Activated CD4-positive, alpha-beta T cell treated with anti-CD3 and anti-CD28 coated beads, Interleukin-2, amount 10 ng/mL, durations not matched to agents 24 days and 14 days (primary cell): ENCODE measurements at regions of chr13 and their contacts with region 1.

Region 1: GRCh38 chr13:40517486-40518480 is 148.7 kb downstream of the FOXO1 start:
- DNase-seq: no peak
- H3K4me3 Mint-ChIP-seq: peak overlapping the region; percentile 72
- H3K27ac Mint-ChIP-seq: peak overlapping the region; percentile 92
- H3K4me1 Mint-ChIP-seq: peaks cover 63% of the 10 kb centered on the region
- H3K27me3 Mint-ChIP-seq: no peaks in the 10 kb centered on the region

Region 2: GRCh38 chr13:40060296-40061007 is 457.3 kb before region 1 on chr13:
- intact Hi-C with region 1: loop called (anchors 2 kb)
- DNase-seq: peak; percentile 53
- H3K4me3 Mint-ChIP-seq: no peak overlapping the region
- H3K27ac Mint-ChIP-seq: peak overlapping the region; percentile 55
- H3K4me1 Mint-ChIP-seq: peaks cover 35% of the 10 kb centered on the region
- H3K27me3 Mint-ChIP-seq: no peaks in the 10 kb centered on the region

Region 3: GRCh38 chr13:40221460-40222201 is 296.2 kb before region 1 on chr13:
- intact Hi-C with region 1: loop called (anchors 5 kb)
- DNase-seq: peak; percentile 74
- H3K4me3 Mint-ChIP-seq: peak overlapping the region; percentile 49
- H3K27ac Mint-ChIP-seq: peak overlapping the region; percentile 45
- H3K4me1 Mint-ChIP-seq: peaks cover 36% of the 10 kb centered on the region
- H3K27me3 Mint-ChIP-seq: no peaks in the 10 kb centered on the region

Region 4: DNA sequence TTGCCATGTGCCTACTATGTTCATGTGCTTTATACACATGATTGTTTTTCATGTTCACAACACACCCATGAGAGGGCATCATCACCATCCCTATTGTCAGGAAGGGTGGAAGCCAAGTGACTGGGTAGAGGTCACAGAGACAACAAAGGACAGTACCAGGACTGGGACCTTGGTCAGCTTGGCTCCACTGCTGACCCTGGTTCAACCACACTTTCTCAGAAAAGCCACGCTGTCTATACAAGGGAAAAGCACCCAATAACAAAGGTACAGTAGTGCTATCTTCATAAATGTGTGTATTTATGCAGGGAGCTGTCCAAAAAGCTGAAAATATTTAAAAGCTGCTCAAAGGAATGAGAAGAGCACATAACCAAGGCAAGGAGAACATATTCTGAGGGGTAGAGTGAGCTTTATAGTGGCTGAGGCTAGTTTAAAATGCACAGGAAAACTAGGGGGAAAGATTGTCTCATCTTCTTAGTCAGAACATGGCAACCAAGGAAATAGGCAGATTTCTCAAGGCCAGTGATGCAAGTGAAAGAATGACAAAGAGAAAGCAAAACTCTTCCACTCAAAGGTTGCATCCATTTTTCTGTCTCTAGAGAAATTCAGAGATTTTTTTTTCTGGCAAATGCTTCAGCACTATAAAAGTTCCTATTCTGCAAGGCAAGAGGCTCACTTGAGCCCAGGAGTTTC is 266.3 kb before region 1 on chr13:
- intact Hi-C with region 1: loop called (anchors 2 kb)
- DNase-seq: peak; percentile 68
- H3K4me3 Mint-ChIP-seq: peak overlapping the region; percentile 48
- H3K27ac Mint-ChIP-seq: peak overlapping the region; percentile 83
- H3K4me1 Mint-ChIP-seq: peaks cover 24% of the 10 kb centered on the region
- H3K27me3 Mint-ChIP-seq: no peaks in the 10 kb centered on the region

Region 5: GRCh38 chr13:40377783-40378182 is 140.0 kb before region 1 on chr13:
- intact Hi-C with region 1: loop called (anchors 1 kb)
- DNase-seq: no peak
- H3K4me3 Mint-ChIP-seq: no peak overlapping the region
- H3K27ac Mint-ChIP-seq: no peak overlapping the region
- H3K4me1 Mint-ChIP-seq: peaks cover 18% of the 10 kb centered on the region
- H3K27me3 Mint-ChIP-seq: no peaks in the 10 kb centered on the region

Region 6: DNA sequence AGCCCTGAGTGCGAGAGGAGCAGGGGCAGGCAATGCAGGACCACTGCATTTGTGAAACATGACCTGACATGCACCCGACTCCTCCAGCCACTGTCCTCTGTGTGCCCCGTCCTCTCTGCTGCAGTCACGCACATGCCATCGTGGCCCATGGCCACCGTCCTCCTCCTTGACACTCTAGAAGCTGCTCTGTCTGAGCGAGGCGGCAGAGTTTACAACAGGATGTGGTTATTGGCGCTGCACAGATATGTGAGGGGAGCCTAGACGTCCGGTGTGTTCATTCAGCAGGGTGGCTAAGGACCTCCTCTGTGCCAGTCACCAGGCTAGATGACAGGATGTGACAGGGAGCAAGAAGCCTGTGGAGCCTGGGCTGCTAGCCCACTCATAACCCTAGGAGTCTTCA is 129.2 kb before region 1 on chr13:
- intact Hi-C with region 1: loop called (anchors 2 kb)
- DNase-seq: peak; percentile 95
- H3K4me3 Mint-ChIP-seq: peak overlapping the region; percentile 87
- H3K27ac Mint-ChIP-seq: peak overlapping the region; percentile 97
- H3K4me1 Mint-ChIP-seq: peaks cover 38% of the 10 kb centered on the region
- H3K27me3 Mint-ChIP-seq: no peaks in the 10 kb centered on the region

Region 7: DNA sequence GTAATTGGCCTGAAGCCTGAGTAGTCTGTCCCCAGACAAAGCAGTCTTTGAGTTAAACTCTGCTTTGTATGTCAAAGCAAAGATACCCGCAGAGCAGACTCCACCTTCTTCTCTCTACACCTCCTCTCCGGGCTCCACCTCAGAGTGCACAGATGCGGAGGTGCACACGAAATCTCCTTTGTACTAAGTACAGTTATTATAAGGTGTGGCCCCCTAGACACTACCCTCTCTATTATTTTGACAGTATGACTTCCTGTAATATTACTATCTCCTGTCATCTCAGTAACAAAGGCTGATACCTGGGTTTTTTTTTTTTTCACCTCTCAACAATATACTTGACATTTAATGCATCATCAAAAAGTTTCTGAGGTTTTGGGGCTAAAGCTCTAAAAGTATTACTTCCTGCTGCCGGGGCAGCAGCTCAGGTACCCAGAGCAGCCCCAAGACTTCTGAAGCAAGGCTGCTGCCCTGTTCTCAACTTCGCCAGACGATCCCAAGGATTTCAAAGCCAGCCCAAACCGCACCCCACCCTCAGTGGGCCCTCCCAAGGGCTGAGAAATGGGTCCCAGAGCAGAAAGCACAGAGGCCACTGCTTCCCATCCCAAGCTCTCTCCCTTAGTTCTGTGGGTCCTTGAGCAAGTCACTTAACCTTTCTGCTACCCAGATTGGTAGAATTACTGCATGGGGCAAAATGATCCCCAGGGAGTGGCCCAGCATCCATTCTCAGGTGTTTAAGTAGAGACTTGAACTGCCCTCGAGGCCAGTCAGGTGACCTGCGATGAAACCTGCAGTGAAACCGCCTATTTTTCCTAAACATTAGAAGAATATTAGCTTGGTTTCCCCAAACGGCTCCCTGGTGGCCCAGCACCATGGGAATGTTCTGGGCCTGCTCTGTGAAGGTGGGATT is 31.9 kb before region 1 on chr13:
- intact Hi-C with region 1: loop called (anchors 1 kb)
- DNase-seq: peak; percentile 87
- H3K4me3 Mint-ChIP-seq: peak overlapping the region; percentile 69
- H3K27ac Mint-ChIP-seq: peak overlapping the region; percentile 90
- H3K4me1 Mint-ChIP-seq: peaks cover 55% of the 10 kb centered on the region
- H3K27me3 Mint-ChIP-seq: no peaks in the 10 kb centered on the region